Sigmoid colon (tissue), 7 donors: ENCODE measurements at regions of chr7 and their contacts with region 1.

Region 1: DNA sequence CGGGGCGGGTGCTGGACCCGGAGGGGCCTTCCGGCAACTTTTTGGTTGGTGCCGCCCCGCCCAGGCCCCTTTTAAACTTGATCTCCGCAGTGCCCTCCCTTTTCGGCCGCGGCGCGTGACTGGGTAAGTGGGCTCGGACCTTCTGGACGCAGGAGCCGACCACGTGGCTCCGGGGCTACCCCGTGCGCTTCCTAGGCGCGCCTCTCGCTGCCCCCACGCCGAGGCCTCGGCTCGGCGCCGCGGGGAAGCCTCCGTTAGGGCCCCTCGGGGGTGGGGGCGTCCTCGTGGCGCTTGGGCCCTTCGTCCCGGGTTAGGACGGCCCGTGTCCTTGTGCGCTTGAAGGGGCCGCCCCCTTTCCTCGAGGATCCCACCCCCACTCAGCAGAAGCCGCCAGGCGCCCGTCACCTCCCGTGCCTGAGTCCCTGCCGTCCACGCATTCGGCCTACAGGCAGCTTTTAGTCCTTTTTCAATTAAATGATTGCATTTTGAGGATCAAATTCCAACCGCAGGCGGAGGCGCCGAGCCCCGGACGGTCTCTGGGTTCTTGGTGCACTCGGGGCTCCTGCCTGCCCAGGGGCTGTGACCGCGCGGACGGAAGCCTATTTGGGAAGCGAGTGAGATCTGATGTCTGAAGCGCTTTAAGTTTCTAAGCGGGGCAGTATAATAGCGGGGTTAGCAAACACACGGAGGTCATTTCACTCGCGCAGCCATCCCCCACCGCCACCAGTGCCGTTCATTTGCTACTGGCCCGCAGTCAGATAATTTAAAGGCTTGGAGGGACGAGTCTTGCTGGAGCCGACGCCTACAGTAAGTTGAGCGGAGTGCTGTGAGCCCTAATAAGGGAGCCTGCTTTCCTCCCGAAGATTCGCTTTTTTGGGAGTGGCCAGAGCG is 31.8 kb upstream of the TOMM7 start:
- DNase-seq: peak; percentile 98
- H3K4me3 ChIP-seq: peak overlapping the region; percentile 62 to 80 (median 75)
- H3K27ac ChIP-seq: peak overlapping the region; percentile 92 to 98 (median 98)
- H3K4me1 ChIP-seq: peaks cover 0 to 38% (median 26%) of the 10 kb centered on the region in 4 donors
- H3K27me3 ChIP-seq: no peaks in the 10 kb centered on the region
- CTCF ChIP-seq: no peak
- EP300 ChIP-seq: peak in 2 of 4 donors; percentile 36 to 60
- POLR2A ChIP-seq: peak; percentile 34 to 41

Region 2: GRCh38 chr7:22559829-22560489 is 294.4 kb before region 1 on chr7:
- intact Hi-C with region 1: loop called (anchors 10 kb)
- DNase-seq: peak; percentile 84
- H3K4me3 ChIP-seq: no peak overlapping the region
- H3K27ac ChIP-seq: peak overlapping the region in 1 of 4 donors; percentile 83
- H3K4me1 ChIP-seq: peaks cover 0 to 30% (median 20%) of the 10 kb centered on the region in 4 donors
- H3K27me3 ChIP-seq: no peaks in the 10 kb centered on the region
- CTCF ChIP-seq: peak; percentile 86 to 90 (median 88)
- EP300 ChIP-seq: no peak
- POLR2A ChIP-seq: no peak

Region 3: DNA sequence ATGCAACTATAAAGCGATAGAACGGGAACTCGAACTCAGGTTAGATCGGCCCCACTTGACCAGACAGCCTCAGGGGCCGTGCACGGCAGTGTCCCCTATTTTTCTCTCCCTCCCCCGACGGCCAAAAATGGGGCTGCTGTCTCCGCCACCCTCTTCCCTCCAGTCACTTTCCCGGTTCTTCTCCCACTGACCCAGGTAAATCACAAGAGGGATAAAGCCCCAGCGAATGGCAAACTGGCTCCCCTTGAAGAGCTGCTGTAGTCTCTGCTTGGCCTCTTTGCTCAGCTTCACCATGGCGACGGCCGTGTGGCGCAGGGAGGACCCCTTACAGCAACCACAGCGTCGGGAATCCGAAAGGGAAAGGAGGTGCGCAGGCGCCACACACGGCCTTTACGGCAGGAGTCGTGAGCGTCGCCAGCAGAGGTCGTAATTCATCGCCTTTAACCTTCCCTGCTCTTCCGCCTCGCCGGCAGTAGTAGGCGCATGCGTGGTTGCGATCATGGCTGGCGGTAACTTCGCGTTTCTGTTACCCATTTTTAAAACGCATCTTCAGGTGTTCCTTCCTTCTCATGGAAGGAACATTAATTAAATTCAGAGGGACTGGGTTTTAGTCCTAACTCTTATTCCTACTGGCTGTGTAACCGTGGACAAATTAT is 31.8 kb before region 1 on chr7 and contains the start of gene TOMM7:
- intact Hi-C with region 1: loop called (anchors 1 kb)
- DNase-seq: peak; percentile 96
- H3K4me3 ChIP-seq: peak within 1 kb of the TSS; percentile 67 to 87 (median 78)
- H3K27ac ChIP-seq: peak within 1 kb of the TSS; percentile 81 to 86 (median 84)
- H3K4me1 ChIP-seq: peaks cover 0 to 37% (median 26%) of the 10 kb centered on the region in 4 donors
- H3K27me3 ChIP-seq: no peaks in the 10 kb centered on the region
- CTCF ChIP-seq: peak in 3 of 4 experiments; percentile 12 to 44 (median 28)
- EP300 ChIP-seq: no peak
- POLR2A ChIP-seq: peak; percentile 43 to 83
- total RNA-seq, gene TOMM7: 148 to 341 (median 277) TPM

Region 4: DNA sequence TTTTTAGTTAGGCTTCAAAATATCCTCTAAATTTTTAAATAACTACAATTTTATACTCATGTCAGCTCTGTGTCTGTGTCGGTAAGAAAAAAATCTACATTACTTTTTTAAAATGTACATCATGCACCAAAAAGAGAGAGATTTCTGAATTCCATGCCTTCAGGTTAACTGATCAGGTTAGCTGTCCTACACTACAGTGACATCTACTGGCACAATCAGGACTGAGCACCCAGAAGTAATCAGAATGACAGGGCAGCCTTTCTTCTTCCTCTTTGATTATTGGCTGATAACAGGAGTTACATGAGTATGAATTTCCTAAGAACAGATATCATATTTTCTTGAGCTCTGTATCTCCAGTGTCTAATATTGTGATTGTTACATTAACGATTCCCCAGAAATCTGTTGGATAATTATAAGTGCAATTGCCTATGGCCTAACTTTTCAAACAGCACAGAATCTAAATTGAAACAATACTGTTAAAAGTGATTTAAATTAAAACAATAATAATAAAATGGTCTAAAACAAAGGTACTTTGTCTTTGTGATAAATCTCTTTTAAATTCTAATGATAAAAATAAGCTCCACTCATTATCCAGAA is 201.3 kb after region 1 on chr7:
- intact Hi-C with region 1: loop called (anchors 10 kb)
- DNase-seq: no peak
- H3K4me3 ChIP-seq: no peak overlapping the region
- H3K27ac ChIP-seq: no peak overlapping the region
- H3K4me1 ChIP-seq: peaks cover 0 to 4% (median 0%) of the 10 kb centered on the region in 4 donors
- H3K27me3 ChIP-seq: no peaks in the 10 kb centered on the region
- CTCF ChIP-seq: peak; percentile 52 to 85 (median 72)
- EP300 ChIP-seq: no peak
- POLR2A ChIP-seq: no peak

Region 5: DNA sequence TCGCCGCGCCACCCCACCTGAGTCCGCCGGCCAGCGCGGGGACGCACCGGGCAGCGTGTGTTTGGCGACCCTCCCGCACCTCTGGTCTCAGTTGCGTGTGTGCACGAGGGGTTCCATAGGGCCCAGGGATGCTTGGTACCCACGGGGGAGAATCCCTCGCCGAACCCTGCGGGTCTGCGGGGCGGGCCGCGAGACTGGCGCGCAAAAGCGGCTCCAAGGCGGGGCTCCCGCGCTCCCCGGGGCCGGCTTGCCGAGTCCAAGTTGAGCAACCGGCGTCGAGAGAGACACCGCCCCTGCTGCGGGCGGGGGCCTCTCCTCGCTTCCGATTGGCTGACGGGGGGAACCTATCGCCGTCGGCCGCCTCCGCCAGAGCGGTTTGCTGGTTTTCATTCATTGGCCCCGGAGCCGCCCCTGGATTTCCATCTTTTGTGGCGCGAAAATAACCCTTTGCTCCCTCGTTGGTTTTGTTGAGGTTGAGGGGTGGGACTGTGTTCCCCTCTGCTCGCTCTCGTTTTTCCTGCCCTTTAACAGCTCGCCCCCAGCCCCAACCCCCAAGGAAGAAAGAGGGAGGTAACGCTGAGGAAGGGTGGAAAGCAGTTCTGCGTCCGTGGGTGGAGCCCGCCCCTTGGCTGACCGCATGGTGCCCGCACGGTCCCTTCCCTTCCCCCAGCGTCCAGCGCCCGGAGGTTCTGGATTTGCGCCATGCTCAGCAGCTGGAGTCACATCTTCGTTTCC is 619.9 kb after region 1 on chr7:
- intact Hi-C with region 1: loop called (anchors 10 kb)
- DNase-seq: peak; percentile 81
- H3K4me3 ChIP-seq: peak overlapping the region in 3 of 4 donors; percentile 6 to 21 (median 20)
- H3K27ac ChIP-seq: no peak overlapping the region
- H3K4me1 ChIP-seq: peaks cover 0 to 37% (median 36%) of the 10 kb centered on the region in 4 donors
- H3K27me3 ChIP-seq: peaks cover 74 to 100% (median 99%) of the 10 kb centered on the region in 3 donors
- CTCF ChIP-seq: no peak
- EP300 ChIP-seq: no peak
- POLR2A ChIP-seq: no peak